ENCODE measurements at regions of chr11 and their contacts with region 1.

Region 1: DNA sequence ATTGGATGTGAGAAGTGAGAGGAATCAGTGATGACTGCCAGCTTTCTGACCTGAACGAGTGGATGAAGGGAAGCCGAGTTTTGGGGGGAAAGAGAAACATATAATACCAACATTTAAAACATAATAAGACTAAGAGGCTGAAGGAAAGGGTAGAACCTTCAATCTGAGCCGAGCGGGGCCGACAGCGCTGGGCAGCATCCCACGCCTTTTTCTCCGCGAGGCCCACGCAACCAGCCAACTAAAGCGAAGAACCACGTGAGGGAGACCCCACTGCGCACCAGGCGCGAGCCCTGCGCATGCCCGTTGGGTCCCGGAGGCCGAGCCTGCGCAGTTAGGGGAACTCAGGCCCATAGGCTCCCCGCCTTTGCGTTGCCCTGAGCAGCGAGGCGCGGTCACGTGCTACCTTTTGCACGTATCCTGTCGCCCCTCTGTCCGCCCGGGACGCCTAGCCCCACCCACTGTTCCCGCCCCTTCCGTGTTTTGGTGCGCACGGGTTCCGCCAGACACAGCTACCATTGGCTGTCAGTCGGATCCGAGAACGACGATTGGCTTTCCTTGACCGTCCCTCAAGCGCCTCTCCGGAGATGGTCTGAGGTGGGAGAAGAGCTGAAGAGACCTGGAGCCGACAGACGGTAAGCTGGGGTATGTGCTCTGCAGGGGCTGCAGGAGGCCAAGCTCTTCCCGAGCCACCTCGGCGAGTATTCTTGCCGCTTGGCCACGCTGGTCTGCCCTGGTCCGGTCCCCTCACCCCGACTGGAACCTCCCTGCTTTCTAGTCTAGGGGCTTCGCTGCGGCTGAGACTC is at the start of gene HINFP:
- DNase-seq: peak; percentile 91 to 98
- ATAC-seq: peak; percentile 99
- H3K4me3 ChIP-seq: peak within 1 kb of the TSS; percentile 94
- H3K27ac ChIP-seq: peak within 1 kb of the TSS; percentile 88 to 91
- H3K4me1 ChIP-seq: peaks cover 10% of the 10 kb centered on the region; the same call in 1 of the 3 replicates
- CTCF ChIP-seq: no peak
- EP300 ChIP-seq: no peak
- POLR2A ChIP-seq: peak; percentile 83
- RAD21 ChIP-seq: no peak
- polyA plus RNA-seq, gene HINFP: 13.0 and 16.3 TPM in 2 replicates

Region 2: DNA sequence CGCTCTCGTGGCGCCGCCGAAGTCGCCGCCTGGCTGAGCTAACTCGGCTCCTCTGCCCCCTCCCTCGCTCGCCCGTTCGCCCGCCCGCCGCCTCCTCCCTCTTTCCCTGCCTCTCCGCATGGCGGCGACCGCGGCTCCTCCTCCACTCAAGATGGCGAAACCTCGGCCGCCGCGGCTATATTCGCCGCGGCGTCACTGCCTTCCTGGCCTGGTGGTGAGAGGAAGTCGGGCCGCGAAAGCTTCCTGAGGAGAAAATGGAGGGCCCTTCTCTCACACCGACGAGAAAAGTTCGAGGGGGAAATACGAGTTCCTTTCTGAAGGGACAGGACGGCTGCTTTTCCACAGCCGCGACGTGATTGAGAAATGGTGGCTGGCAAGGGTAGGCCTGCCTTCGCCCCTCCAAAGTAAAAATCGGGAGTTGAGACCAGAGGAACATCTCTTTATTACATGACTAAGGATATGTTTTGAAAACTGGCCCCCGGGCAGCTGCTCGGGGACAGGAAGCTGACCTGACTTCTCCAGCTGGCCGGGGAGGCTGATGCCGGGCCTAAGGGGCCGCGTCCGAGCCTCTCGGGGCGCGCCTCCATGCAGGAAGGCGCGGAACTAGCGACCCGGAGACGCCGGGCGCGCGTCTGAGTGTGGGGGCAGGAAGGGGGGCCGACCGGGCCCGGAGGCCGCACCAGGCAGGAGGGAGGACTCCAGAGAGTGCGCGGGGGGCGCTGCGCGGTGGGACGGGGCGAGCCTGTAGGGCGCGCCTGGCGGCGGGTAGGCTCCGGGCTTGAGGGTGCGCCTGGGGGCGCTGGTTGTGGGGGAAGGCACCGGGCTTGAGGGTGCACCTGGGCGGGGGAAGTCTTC is 329.9 kb before region 1 on chr11 and contains the start of gene DDX6:
- CTCF ChIA-PET with region 1: no interaction called
- POLR2A ChIA-PET with region 1: no interaction called
- DNase-seq: peak; percentile 62 to 81
- ATAC-seq: peak; percentile 79 to 81
- H3K4me3 ChIP-seq: peak within 1 kb of the TSS; percentile 69
- H3K27ac ChIP-seq: peak within 1 kb of the TSS; percentile 100
- H3K4me1 ChIP-seq: peaks cover 23% of the 10 kb centered on the region
- CTCF ChIP-seq: no peak; the same call in 2 of the 3 replicates
- EP300 ChIP-seq: no peak
- POLR2A ChIP-seq: peak; percentile 62
- RAD21 ChIP-seq: peak in 1 of 2 experiments; percentile 14; a peak in 1 of 5 replicates
- polyA plus RNA-seq, gene DDX6: 41.4 and 43.8 TPM in 2 replicates

Region 3: DNA sequence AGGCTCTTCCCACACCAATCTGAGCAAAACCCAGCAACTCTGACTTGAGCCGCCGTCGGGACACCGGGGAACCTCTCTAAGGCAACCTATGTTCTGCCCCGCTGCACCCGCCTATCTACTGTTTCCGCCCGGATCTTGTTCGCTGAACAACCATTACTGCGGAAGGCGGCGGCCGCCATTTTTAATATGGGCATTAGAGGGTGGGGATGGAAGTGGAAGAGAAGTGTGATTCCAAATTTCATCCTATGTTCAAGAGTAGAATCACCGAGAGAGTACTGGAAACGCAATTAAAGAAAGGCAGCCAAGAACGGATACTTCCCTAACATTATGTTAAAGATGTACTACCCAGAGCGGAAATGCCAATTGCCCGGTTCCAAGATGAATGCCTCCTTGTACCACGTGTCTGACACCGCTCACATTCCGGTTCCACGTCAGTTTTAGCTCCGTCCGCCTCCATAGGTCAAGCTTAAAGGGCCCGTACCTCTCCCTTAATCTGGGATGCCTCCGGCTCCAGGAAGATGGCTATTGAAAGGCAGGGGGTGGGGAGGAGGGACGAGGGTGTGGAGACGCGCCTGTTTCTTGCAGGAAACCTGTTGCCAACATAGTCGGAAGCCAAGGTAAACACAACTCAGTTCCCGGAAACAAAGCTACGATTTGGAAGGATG is 19.3 kb before region 1 on chr11 and contains the start of gene DPAGT1:
- CTCF ChIA-PET with region 1: interaction called, 7 read pairs
- POLR2A ChIA-PET with region 1: interaction called, 17 read pairs
- DNase-seq: peak; percentile 74 to 98
- ATAC-seq: peak; percentile 90 to 92
- H3K4me3 ChIP-seq: peak within 1 kb of the TSS; percentile 78
- H3K27ac ChIP-seq: peak within 1 kb of the TSS; percentile 90 to 98
- H3K4me1 ChIP-seq: peaks cover 26% of the 10 kb centered on the region
- CTCF ChIP-seq: no peak
- EP300 ChIP-seq: no peak; a peak in 1 of 5 replicates
- POLR2A ChIP-seq: peak; percentile 34; the same call in 1 of the 2 replicates
- RAD21 ChIP-seq: no peak
- polyA plus RNA-seq, gene DPAGT1: 81.4 and 86.9 TPM in 2 replicates

Measured in A549 (cell line).